ENCODE measurements at regions of chr13 and their contacts with region 1.

Region 1: GRCh38 chr13:77779552-77780272 is 82.2 kb downstream of the SLAIN1 start:
- DNase-seq: peak in 12 of 35 experiments; percentile 1 to 64 (median 10)
- ATAC-seq: peak; percentile 49 to 81 (median 58)
- H3K4me3 ChIP-seq: no peak overlapping the region
- H3K4me3 Mint-ChIP-seq: no peak overlapping the region
- H3K27ac ChIP-seq: no peak overlapping the region
- H3K27ac Mint-ChIP-seq: no peak overlapping the region
- H3K4me1 ChIP-seq: peaks cover 0 to 3% of the 10 kb centered on the region in 2 experiments
- H3K4me1 Mint-ChIP-seq: peaks cover 8 to 12% (median 10%) of the 10 kb centered on the region in 3 donors
- H3K27me3 ChIP-seq: no peaks in the 10 kb centered on the region
- H3K27me3 Mint-ChIP-seq: no peaks in the 10 kb centered on the region

Region 2: GRCh38 chr13:77565635-77566034 is 214.1 kb before region 1 on chr13:
- CTCF ChIA-PET with region 1: interaction called in 1 of 2 experiments, 10 read pairs
- POLR2A ChIA-PET with region 1: no interaction called
- DNase-seq: peak in 1 of 35 experiments; percentile 35
- ATAC-seq: no peak
- H3K4me3 ChIP-seq: no peak overlapping the region
- H3K4me3 Mint-ChIP-seq: no peak overlapping the region
- H3K27ac ChIP-seq: no peak overlapping the region
- H3K27ac Mint-ChIP-seq: no peak overlapping the region
- H3K4me1 ChIP-seq: no peaks in the 10 kb centered on the region
- H3K4me1 Mint-ChIP-seq: no peaks in the 10 kb centered on the region
- H3K27me3 ChIP-seq: no peaks in the 10 kb centered on the region
- H3K27me3 Mint-ChIP-seq: peaks cover 8 to 14% of the 10 kb centered on the region in 2 donors

Region 3: DNA sequence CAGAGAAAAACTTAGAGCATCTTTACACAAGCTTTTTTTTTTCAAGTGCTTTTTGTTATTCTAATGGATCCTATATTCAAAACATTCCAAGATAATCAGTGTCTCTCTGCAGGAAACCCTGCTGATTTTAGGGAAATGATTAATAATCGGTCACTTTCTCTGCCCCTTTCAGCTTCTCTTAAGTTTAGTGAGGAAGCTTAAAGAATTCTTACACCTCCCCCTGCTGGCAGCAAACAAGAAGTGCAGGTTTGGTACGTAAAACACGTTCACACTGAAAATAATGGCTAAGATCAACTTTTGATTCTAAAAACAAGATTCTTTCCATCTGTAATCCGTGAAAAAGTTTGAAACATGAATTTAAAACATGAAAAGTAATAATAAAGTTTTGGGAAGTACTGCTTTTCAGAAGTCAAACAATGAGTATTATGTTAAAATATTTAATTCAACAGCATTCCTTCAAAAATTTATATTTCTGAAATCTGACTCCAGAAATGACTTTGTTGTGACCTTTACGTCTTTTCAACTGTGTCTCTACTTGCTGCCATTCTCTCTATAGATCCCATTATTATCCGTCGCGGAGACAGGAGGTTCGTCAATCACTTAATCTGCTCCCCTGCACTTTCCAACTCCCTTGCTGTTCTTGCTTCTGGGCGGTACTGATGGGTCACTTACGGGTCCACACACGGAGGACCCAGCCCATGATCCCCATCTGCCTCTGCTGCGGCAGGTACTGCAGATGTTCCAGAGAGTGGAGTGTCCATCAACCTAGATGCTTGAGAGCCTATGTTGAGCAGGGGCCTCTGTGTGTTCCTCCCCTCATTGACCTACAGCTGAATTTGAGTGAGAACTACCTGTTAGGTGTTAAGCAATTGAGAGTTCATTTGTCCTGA is 342.0 kb after region 1 on chr13:
- CTCF ChIA-PET with region 1: interaction called, 13 to 31 read pairs
- POLR2A ChIA-PET with region 1: no interaction called
- DNase-seq: peak in 20 of 35 experiments; percentile 1 to 70 (median 12)
- ATAC-seq: no peak
- H3K4me3 ChIP-seq: no peak overlapping the region
- H3K4me3 Mint-ChIP-seq: no peak overlapping the region
- H3K27ac ChIP-seq: no peak overlapping the region
- H3K27ac Mint-ChIP-seq: no peak overlapping the region
- H3K4me1 ChIP-seq: no peaks in the 10 kb centered on the region
- H3K4me1 Mint-ChIP-seq: peaks cover 0 to 4% (median 3%) of the 10 kb centered on the region in 3 donors
- H3K27me3 ChIP-seq: peaks cover 0 to 3% of the 10 kb centered on the region in 2 experiments
- H3K27me3 Mint-ChIP-seq: peaks cover 8 to 30% of the 10 kb centered on the region in 2 donors

Measured in T-cell (primary cell).